MCF 10A (cell line): ENCODE measurements at regions of chr17 and their contacts with region 1.

Region 1: GRCh38 chr17:66431910-66432683 is 129.7 kb downstream of the PRKCA start:
- DNase-seq: peak; percentile 80
- H3K4me3 Mint-ChIP-seq: peak overlapping the region; percentile 67
- H3K27ac Mint-ChIP-seq: peak overlapping the region; percentile 95
- H3K4me1 Mint-ChIP-seq: peaks cover 20% of the 10 kb centered on the region
- H3K27me3 Mint-ChIP-seq: no peaks in the 10 kb centered on the region
- CTCF ChIP-seq: no peak

Region 2: DNA sequence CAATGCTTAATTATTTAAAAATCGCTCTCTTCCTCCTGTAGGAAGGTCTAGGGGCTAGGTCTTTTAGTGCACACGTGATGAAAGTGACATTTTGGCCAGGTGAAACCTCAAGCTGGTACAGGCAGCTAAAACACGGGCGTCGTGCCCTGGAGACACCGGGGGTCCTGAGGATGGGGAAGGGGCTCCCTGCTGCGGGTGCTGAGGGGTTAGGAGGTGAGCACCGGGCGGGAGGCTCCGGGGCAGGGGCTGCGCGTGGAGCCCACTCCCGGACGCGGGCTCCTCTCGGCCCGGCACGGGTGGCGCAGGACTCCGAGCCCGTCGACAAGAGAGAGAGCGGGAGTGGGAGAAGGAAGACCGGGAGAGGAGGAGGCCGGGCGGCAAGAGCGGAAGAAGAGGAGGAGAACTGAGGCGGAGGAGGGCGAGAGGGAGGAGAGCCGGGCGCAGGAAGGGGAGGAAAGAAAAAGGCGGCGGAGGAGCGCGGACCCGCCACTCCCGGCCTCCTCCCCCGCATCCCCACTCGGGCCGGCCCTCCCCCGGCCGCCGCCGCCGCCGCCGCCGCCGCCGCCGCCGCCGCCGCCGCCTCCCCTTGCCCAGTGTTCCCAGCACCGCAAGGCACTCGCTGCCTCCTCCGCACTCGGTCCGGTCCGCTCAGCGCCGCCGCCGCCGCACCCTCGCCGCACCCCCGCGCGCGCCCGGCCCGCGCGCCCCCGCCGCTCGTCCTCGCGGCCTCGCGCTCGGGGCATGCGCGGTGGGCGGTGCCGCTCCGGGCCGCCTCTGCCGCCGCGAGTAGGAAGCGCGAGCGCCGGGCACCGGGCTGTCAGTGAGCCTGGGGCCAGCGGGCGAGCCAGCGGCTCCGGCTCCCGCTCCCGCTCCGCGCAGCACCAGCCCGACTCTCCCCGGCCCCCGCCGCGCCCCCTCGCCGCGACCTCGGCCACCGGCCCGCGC is 130.0 kb before region 1 on chr17 and contains the start of gene PRKCA:
- CTCF ChIA-PET with region 1: interaction called, 3 read pairs
- POLR2A ChIA-PET with region 1: interaction called, 5 read pairs
- intact Hi-C with region 1: loop called (anchors 10 kb)
- DNase-seq: peak; percentile 63
- H3K4me3 Mint-ChIP-seq: peak within 1 kb of the TSS; percentile 96
- H3K27ac Mint-ChIP-seq: peak within 1 kb of the TSS; percentile 97
- H3K4me1 Mint-ChIP-seq: peaks cover 35% of the 10 kb centered on the region
- H3K27me3 Mint-ChIP-seq: no peaks in the 10 kb centered on the region
- CTCF ChIP-seq: no peak
- total RNA-seq, gene PRKCA: 20.7 and 22.8 TPM in 2 replicates

Region 3: DNA sequence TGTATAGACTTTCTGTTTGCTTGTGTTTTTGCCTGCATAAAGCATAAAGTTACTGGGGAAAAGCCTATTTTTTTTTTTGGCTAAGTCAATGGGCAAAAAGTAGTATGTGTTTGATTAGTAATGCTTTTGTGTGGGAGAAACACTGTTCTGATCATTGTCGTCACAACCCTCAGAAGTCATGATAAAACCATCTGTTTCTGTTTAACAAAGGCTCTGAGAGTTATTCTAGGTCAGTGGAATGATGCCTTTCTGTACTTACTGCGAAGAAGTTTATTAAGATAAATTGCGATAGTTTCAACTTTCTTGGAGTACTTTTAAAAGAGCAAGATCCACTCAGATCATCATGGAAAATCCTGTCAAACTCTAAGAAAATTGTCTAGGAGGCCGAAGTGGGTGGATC is 48.8 kb before region 1 on chr17:
- CTCF ChIA-PET with region 1: no interaction called
- POLR2A ChIA-PET with region 1: no interaction called
- intact Hi-C with region 1: no loop called
- DNase-seq: no peak
- H3K4me3 Mint-ChIP-seq: no peak overlapping the region
- H3K27ac Mint-ChIP-seq: no peak overlapping the region
- H3K4me1 Mint-ChIP-seq: peaks cover 5% of the 10 kb centered on the region
- H3K27me3 Mint-ChIP-seq: no peaks in the 10 kb centered on the region
- CTCF ChIP-seq: no peak

Region 4: GRCh38 chr17:66459811-66460270 is 27.7 kb after region 1 on chr17:
- CTCF ChIA-PET with region 1: interaction called, 3 read pairs
- POLR2A ChIA-PET with region 1: interaction called, 20 read pairs
- intact Hi-C with region 1: no loop called
- DNase-seq: peak; percentile 92
- H3K4me3 Mint-ChIP-seq: peak overlapping the region; percentile 48
- H3K27ac Mint-ChIP-seq: no peak overlapping the region
- H3K4me1 Mint-ChIP-seq: peaks cover 23% of the 10 kb centered on the region
- H3K27me3 Mint-ChIP-seq: no peaks in the 10 kb centered on the region
- CTCF ChIP-seq: no peak